GM12878 (cell line): ENCODE measurements at regions of chr6 and their contacts with region 1.

Region 1: GRCh38 chr6:30883685-30884520 is at the start of gene DDR1:
- DNase-seq: no peak
- ATAC-seq: peak; percentile 65
- H3K4me3 ChIP-seq: peak within 1 kb of the TSS; percentile 75
- H3K27ac ChIP-seq: peak within 1 kb of the TSS; percentile 81
- H3K4me1 ChIP-seq: peaks cover 38% of the 10 kb centered on the region
- H3K27me3 ChIP-seq: no peaks in the 10 kb centered on the region
- CTCF ChIP-seq: no peak
- EP300 ChIP-seq: no peak
- POLR2A ChIP-seq: peak; percentile 18; the same call in 1 of the 2 replicates
- RAD21 ChIP-seq: no peak
- polyA plus RNA-seq, gene DDR1: 1.1 to 2.2 TPM

Region 2: DNA sequence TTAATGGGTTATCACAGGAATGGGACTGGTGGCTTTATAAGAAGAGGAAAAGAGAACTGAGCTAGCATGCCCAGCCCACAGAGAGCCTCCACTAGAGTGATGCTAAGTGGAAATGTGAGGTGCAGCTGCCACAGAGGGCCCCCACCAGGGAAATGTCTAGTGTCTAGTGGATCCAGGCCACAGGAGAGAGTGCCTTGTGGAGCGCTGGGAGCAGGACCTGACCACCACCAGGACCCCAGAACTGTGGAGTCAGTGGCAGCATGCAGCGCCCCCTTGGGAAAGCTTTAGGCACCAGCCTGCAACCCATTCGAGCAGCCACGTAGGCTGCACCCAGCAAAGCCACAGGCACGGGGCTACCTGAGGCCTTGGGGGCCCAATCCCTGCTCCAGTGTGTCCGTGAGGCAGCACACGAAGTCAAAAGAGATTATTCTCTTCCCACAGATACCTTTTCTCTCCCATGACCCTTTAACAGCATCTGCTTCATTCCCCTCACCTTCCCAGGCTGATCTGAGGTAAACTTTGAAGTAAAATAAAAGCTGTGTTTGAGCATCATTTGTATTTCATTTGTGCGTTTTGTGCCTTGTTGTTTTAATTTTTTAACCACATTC is 390.2 kb before region 1 on chr6:
- CTCF ChIA-PET with region 1: no interaction called
- POLR2A ChIA-PET with region 1: no interaction called
- RAD21 ChIA-PET with region 1: no interaction called
- SMC1A ChIA-PET with region 1: no interaction called
- in situ Hi-C with region 1: no loop called
- intact Hi-C with region 1: no loop called
- DNase-seq: no peak
- ATAC-seq: peak; percentile 13
- H3K4me3 ChIP-seq: no peak overlapping the region
- H3K27ac ChIP-seq: no peak overlapping the region
- H3K4me1 ChIP-seq: peaks cover 14% of the 10 kb centered on the region
- H3K27me3 ChIP-seq: no peaks in the 10 kb centered on the region
- CTCF ChIP-seq: peak; percentile 25 to 48 (median 46); a peak in 4 of 6 replicates
- EP300 ChIP-seq: no peak
- POLR2A ChIP-seq: peak; percentile 76
- RAD21 ChIP-seq: no peak

Region 3: GRCh38 chr6:30898750-30899360 is 15.0 kb after region 1 on chr6:
- CTCF ChIA-PET with region 1: interaction called, 7 read pairs
- POLR2A ChIA-PET with region 1: interaction called, 8 read pairs
- RAD21 ChIA-PET with region 1: interaction called, 16 read pairs
- SMC1A ChIA-PET with region 1: interaction called, 9 read pairs
- in situ Hi-C with region 1: no loop called
- intact Hi-C with region 1: loop called (anchors 2 kb)
- DNase-seq: no peak
- ATAC-seq: no peak
- H3K4me3 ChIP-seq: no peak overlapping the region
- H3K27ac ChIP-seq: no peak overlapping the region
- H3K4me1 ChIP-seq: peaks cover 32% of the 10 kb centered on the region
- H3K27me3 ChIP-seq: no peaks in the 10 kb centered on the region
- CTCF ChIP-seq: no peak
- EP300 ChIP-seq: no peak
- POLR2A ChIP-seq: no peak
- RAD21 ChIP-seq: no peak

Region 4: DNA sequence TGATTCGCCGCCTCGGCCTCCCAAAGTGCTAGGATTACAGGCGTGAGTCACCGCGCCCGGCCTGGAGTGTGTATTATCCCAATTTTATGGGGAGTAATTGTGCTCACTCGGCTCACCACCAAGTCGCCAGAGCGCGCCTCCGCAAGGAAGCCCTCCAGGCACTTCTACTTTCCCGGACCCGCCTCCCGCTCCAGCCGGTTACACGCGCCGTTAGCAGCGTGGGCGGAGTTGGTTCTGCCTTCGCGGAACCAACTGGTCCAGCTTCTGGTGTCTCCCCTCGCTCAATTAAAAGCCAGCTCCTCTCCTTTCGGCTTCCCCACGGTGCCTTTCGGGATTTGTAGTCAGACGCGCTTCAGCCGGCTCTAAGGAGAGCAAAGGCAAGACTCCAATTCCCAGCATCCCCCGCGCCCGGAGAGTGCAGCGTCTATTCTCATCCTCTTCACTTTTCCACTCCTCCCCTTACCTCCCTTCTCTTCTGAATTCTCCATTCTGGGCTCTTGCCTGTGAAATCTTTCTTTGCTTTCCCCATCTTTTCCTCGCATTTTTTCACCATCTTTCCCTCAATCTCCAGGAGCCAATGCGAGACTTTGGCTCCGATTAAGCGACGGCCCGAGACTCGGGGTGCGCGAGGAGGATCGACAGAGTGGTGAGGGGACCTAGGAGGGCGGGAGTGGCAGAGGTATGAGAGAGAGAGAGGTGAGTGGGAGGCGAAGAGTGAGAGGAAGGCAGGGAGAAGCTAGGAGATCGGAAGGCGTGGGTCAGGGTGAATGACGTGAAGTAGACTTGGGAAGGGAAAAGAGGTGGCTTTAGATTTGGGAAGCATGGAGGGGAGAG is 24.1 kb after region 1 on chr6 and contains the start of gene GTF2H4:
- CTCF ChIA-PET with region 1: interaction called, 71 read pairs
- POLR2A ChIA-PET with region 1: interaction called, 50 read pairs
- RAD21 ChIA-PET with region 1: interaction called, 138 read pairs
- SMC1A ChIA-PET with region 1: interaction called, 40 read pairs
- in situ Hi-C with region 1: no loop called
- intact Hi-C with region 1: loop called (anchors 2 kb)
- DNase-seq: peak; percentile 94
- ATAC-seq: peak; percentile 99
- H3K4me3 ChIP-seq: peak within 1 kb of the TSS; percentile 100
- H3K27ac ChIP-seq: peak within 1 kb of the TSS; percentile 77
- H3K4me1 ChIP-seq: peaks cover 16% of the 10 kb centered on the region
- H3K27me3 ChIP-seq: no peaks in the 10 kb centered on the region
- CTCF ChIP-seq: no peak
- EP300 ChIP-seq: no peak
- POLR2A ChIP-seq: peak; percentile 65
- RAD21 ChIP-seq: 0 out of 2 replicates have a peak, but pooled peaks have one; percentile 1
- polyA plus RNA-seq, gene GTF2H4: 1.1 to 2.2 TPM

Region 5: GRCh38 chr6:31016659-31017299 is 132.9 kb after region 1 on chr6:
- CTCF ChIA-PET with region 1: no interaction called
- POLR2A ChIA-PET with region 1: no interaction called
- RAD21 ChIA-PET with region 1: no interaction called
- SMC1A ChIA-PET with region 1: no interaction called
- in situ Hi-C with region 1: no loop called
- intact Hi-C with region 1: no loop called
- DNase-seq: no peak
- ATAC-seq: no peak
- H3K4me3 ChIP-seq: no peak overlapping the region
- H3K27ac ChIP-seq: no peak overlapping the region
- H3K4me1 ChIP-seq: no peaks in the 10 kb centered on the region
- H3K27me3 ChIP-seq: no peaks in the 10 kb centered on the region; a peak in 1 of 4 replicates
- CTCF ChIP-seq: no peak
- EP300 ChIP-seq: no peak
- POLR2A ChIP-seq: no peak
- RAD21 ChIP-seq: no peak

Region 6: DNA sequence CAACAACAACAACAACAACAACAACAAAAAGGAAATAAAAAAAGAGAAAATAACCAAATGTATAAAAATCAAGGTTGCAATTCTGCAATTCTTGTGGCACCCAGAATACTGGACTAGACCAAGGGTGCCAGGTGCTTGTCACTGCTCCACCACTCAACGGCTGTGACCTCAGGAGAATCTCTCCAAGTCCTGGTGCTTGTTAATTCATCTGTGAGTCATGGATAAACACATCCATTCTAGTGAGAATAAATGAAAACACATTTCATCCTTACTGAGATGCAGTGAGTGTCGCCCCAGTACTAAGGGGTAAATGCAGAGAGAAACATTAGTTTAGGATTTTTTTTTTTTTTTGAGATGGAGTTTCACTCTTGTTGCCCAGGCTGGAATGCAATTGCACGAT is 356.0 kb after region 1 on chr6:
- CTCF ChIA-PET with region 1: no interaction called
- POLR2A ChIA-PET with region 1: no interaction called
- RAD21 ChIA-PET with region 1: no interaction called
- SMC1A ChIA-PET with region 1: no interaction called
- in situ Hi-C with region 1: no loop called
- intact Hi-C with region 1: no loop called
- DNase-seq: no peak
- ATAC-seq: no peak
- H3K4me3 ChIP-seq: no peak overlapping the region
- H3K27ac ChIP-seq: no peak overlapping the region
- H3K4me1 ChIP-seq: no peaks in the 10 kb centered on the region
- H3K27me3 ChIP-seq: peaks cover 0 to 3% of the 10 kb centered on the region in 2 experiments; a peak in 1 of 4 replicates
- CTCF ChIP-seq: no peak
- EP300 ChIP-seq: no peak
- POLR2A ChIP-seq: no peak
- RAD21 ChIP-seq: no peak